ENCODE measurements at regions of chr14 and their contacts with region 1.

Region 1: DNA sequence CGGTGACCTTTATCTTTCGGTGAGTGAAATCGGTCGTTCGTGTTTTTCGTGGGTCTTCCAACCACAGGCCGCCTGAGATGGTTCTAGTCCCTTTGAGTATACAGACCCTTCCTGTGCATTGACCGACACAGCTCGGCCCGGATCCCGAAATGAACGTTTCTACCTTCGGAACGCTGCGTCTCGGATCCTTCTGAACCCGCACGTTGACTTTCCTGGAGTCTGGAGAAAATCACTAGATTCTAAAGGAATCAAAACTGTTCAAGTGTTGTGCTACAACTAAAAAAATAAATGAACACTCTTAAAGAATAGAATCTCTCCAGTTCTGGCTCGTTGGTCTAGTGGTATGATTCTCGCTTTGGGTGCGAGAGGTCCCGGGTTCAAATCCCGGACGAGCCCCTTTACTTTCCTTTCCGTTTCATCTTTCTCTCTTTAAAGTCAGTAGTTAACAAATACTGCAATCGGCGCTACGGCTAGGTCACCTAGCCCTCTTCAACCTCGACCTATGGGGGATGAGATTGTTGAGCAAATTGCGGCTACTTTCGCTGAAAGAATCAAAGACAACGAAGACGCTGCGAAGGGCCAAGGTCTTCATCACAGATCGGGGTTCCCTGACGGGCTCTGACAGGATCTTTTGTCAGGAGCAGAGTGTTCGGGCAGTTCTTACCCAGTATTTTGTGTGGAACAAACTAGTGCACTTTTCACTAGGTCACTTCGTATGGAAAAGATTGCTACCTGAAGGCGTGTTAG is 8.6 kb downstream of the OR6S1 start:
- DNase-seq: peak; percentile 81
- H3K4me3 Mint-ChIP-seq: peak overlapping the region; percentile 76
- H3K27ac Mint-ChIP-seq: peak overlapping the region; percentile 87
- H3K4me1 Mint-ChIP-seq: peaks cover 42% of the 10 kb centered on the region
- H3K27me3 Mint-ChIP-seq: peaks cover 38% of the 10 kb centered on the region

Region 2: GRCh38 chr14:20539906-20540305 is 92.9 kb before region 1 on chr14:
- CTCF ChIA-PET with region 1: no interaction called
- POLR2A ChIA-PET with region 1: no interaction called
- intact Hi-C with region 1: no loop called
- DNase-seq: no peak
- H3K4me3 Mint-ChIP-seq: no peak overlapping the region
- H3K27ac Mint-ChIP-seq: no peak overlapping the region
- H3K4me1 Mint-ChIP-seq: no peaks in the 10 kb centered on the region
- H3K27me3 Mint-ChIP-seq: peaks cover 7% of the 10 kb centered on the region

Region 3: GRCh38 chr14:20652996-20653975 is 20.4 kb after region 1 on chr14:
- CTCF ChIA-PET with region 1: no interaction called
- POLR2A ChIA-PET with region 1: interaction called, 4 read pairs
- intact Hi-C with region 1: loop called (anchors 1 kb)
- DNase-seq: peak; percentile 85
- H3K4me3 Mint-ChIP-seq: peak overlapping the region; percentile 63
- H3K27ac Mint-ChIP-seq: no peak overlapping the region
- H3K4me1 Mint-ChIP-seq: peaks cover 22% of the 10 kb centered on the region
- H3K27me3 Mint-ChIP-seq: peaks cover 53% of the 10 kb centered on the region

Measured in activated CD4-positive, alpha-beta memory T cell treated with anti-CD3 and anti-CD28 coated beads for 36 hours (primary cell).